A549 (cell line): ENCODE measurements at regions of chr3 and their contacts with region 1.

Region 1: DNA sequence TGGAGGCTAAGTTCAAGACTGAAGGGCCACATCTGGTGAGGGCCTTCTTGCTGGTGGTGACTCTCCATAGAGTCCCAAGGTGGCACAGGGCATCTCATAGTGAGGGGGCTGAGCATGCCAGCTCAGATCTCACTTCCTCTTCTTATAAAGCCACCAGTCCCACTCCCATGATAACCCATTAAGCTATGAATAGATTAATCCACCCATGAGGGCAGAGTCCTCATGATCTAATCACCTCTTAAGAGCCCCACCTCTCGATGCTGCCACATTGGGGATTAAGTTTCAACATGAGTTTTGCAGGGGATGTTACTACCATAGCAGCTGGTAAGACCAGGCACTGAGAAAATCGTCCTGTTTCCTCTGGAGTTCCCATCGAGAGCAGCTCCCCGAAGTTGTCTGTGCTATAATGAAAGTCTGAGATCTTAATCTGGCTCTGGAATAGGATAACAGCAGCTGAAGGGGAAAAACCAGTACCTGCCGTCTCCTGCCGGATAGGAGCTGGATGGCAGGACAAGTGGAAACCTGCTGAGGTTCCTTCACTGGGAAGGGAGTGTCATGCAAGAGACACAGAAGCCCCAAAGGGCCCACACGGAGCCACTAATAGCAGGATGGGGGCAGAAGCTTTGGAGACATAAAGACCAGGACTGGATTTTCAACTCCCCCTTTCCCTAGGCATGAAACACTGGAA is 79.5 kb upstream of the EPHB3 start:
- DNase-seq: no peak
- ATAC-seq: no peak
- H3K4me3 ChIP-seq: no peak overlapping the region
- H3K27ac ChIP-seq: no peak overlapping the region
- H3K4me1 ChIP-seq: no peaks in the 10 kb centered on the region
- CTCF ChIP-seq: no peak
- EP300 ChIP-seq: no peak
- POLR2A ChIP-seq: no peak
- RAD21 ChIP-seq: no peak

Region 2: GRCh38 chr3:184284708-184285107 is 197.4 kb before region 1 on chr3:
- CTCF ChIA-PET with region 1: no interaction called
- POLR2A ChIA-PET with region 1: no interaction called
- DNase-seq: peak; percentile 71 to 78
- ATAC-seq: peak; percentile 79 to 86
- H3K4me3 ChIP-seq: no peak overlapping the region
- H3K27ac ChIP-seq: no peak overlapping the region
- H3K4me1 ChIP-seq: no peaks in the 10 kb centered on the region
- CTCF ChIP-seq: peak; percentile 26; the same call in 2 of the 3 replicates
- EP300 ChIP-seq: no peak
- POLR2A ChIP-seq: no peak
- RAD21 ChIP-seq: peak; percentile 39 to 67; a peak in 4 of 5 replicates

Region 3: GRCh38 chr3:184448311-184449160 is 33.6 kb before region 1 on chr3:
- CTCF ChIA-PET with region 1: no interaction called
- POLR2A ChIA-PET with region 1: no interaction called
- DNase-seq: peak; percentile 13 to 53
- ATAC-seq: peak; percentile 64 to 82
- H3K4me3 ChIP-seq: no peak overlapping the region
- H3K27ac ChIP-seq: peak overlapping the region; percentile 22 to 64; a peak in 2 of 6 replicates
- H3K4me1 ChIP-seq: peaks cover 10% of the 10 kb centered on the region; the same call in 2 of the 3 replicates
- CTCF ChIP-seq: no peak
- EP300 ChIP-seq: no peak
- POLR2A ChIP-seq: no peak
- RAD21 ChIP-seq: no peak

Region 4: DNA sequence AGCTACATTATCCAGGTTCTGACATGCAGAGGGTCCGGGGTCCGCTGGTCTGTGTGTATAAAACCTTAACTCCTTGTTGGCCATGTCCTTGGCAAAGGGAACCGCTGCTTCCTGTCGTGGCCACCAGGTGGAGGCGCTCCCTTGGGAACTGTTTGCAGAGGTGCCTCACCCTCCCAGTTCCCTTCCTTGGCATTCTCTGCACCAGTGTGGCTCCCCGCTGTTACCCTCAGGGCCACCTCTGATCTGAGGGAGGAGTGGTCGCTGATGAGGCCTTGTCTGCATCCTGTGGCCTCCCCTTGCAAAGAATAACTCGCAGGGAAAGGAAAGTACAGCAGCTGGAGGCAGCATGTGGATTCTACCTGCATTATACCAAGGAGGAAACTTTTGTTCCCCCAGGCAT is 12.7 kb before region 1 on chr3:
- CTCF ChIA-PET with region 1: interaction called, 10 read pairs
- POLR2A ChIA-PET with region 1: no interaction called
- DNase-seq: peak; percentile 37 to 41
- ATAC-seq: peak; percentile 77 to 89
- H3K4me3 ChIP-seq: no peak overlapping the region
- H3K27ac ChIP-seq: no peak overlapping the region
- H3K4me1 ChIP-seq: no peaks in the 10 kb centered on the region
- CTCF ChIP-seq: peak; percentile 48
- EP300 ChIP-seq: no peak
- POLR2A ChIP-seq: no peak
- RAD21 ChIP-seq: peak; percentile 47 to 55; a peak in 4 of 5 replicates